Pancreas (tissue), 10 donors: ENCODE measurements at regions of chr11 and their contacts with region 1.

Region 1: GRCh38 chr11:12963792-12964536 is 45.2 kb upstream of the RASSF10 start:
- DNase-seq: peak; percentile 45 to 86 (median 77)
- ATAC-seq: peak; percentile 95 to 98 (median 96)
- H3K4me3 ChIP-seq: no peak overlapping the region
- H3K27ac ChIP-seq: no peak overlapping the region
- H3K4me1 ChIP-seq: no peaks in the 10 kb centered on the region
- H3K27me3 ChIP-seq: no peaks in the 10 kb centered on the region
- CTCF ChIP-seq: peak; percentile 62 to 90 (median 76)

Region 2: GRCh38 chr11:13140028-13140870 is 176.3 kb after region 1 on chr11:
- intact Hi-C with region 1: loop called in 1 of 3 experiments (anchors 10 kb)
- DNase-seq: peak in 5 of 6 donors; percentile 54 to 86 (median 78)
- ATAC-seq: peak; percentile 96 to 99 (median 98)
- H3K4me3 ChIP-seq: no peak overlapping the region
- H3K27ac ChIP-seq: peak overlapping the region; percentile 13 to 82 (median 58)
- H3K4me1 ChIP-seq: peaks cover 13 to 17% (median 14%) of the 10 kb centered on the region in 3 donors
- H3K27me3 ChIP-seq: no peaks in the 10 kb centered on the region
- CTCF ChIP-seq: no peak

Region 3: GRCh38 chr11:13152736-13153533 is 189.0 kb after region 1 on chr11:
- intact Hi-C with region 1: loop called in 2 of 3 experiments (anchors 5 to 10 kb)
- DNase-seq: no peak
- ATAC-seq: peak in 2 of 4 donors; percentile 56 to 64
- H3K4me3 ChIP-seq: no peak overlapping the region
- H3K27ac ChIP-seq: no peak overlapping the region
- H3K4me1 ChIP-seq: no peaks in the 10 kb centered on the region
- H3K27me3 ChIP-seq: no peaks in the 10 kb centered on the region
- CTCF ChIP-seq: peak in 3 of 4 donors; percentile 12 to 17 (median 17)

Region 4: GRCh38 chr11:13183094-13183825 is 219.3 kb after region 1 on chr11:
- intact Hi-C with region 1: loop called in 1 of 3 experiments (anchors 10 kb)
- DNase-seq: no peak
- ATAC-seq: peak in 3 of 4 donors; percentile 76 to 89 (median 81)
- H3K4me3 ChIP-seq: no peak overlapping the region
- H3K27ac ChIP-seq: no peak overlapping the region
- H3K4me1 ChIP-seq: peaks cover 0 to 4% (median 3%) of the 10 kb centered on the region in 3 donors
- H3K27me3 ChIP-seq: no peaks in the 10 kb centered on the region
- CTCF ChIP-seq: peak in 3 of 4 donors; percentile 8 to 22 (median 21)